ENCODE measurements at regions of chr17 and their contacts with region 1.

Region 1: GRCh38 chr17:7851438-7852256 is 3.2 kb upstream of the TMEM88 start:
- DNase-seq: peak; percentile 90 to 98 (median 96)
- ATAC-seq: peak; percentile 84
- H3K4me3 ChIP-seq: peak overlapping the region; percentile 44 to 58
- H3K4me3 Mint-ChIP-seq: peak overlapping the region; percentile 68
- H3K27ac ChIP-seq: peak overlapping the region; percentile 53 to 54
- H3K27ac Mint-ChIP-seq: peak overlapping the region; percentile 91
- H3K4me1 ChIP-seq: peaks cover 27% of the 10 kb centered on the region
- H3K4me1 Mint-ChIP-seq: peaks cover 22% of the 10 kb centered on the region
- H3K27me3 ChIP-seq: no peaks in the 10 kb centered on the region
- H3K27me3 Mint-ChIP-seq: no peaks in the 10 kb centered on the region
- CTCF ChIP-seq: peak; percentile 97

Region 2: DNA sequence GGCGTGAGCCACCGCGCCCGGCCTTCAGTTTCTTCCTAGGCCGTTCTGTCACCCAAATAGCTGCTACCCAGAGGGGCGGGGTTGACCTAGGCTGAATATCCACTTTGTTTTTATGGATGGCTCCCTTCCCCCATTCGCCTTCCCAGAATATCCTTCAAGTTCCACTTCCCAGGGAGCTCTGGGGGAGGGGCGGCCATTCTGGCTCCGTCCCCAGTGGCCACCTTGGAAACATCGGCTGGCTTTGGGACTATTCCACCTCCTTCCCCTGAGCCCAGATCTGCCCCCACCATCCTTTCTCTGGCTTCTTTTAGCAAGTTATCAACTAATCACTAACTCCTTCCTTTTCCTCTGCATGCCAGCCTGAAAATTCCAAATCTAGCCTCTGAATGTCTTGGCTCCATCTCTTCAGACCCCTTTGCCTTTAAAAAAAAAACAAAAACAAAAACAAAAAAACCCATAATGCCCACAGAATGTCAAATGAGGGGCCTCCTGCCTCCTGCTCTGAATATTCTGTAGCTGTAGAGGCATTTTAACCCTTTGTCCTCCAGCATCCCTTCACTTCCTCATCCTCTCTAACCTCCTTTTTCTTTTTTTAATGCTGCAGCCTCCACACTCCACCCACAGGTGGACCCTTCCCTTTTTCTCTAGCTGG is 194.6 kb before region 1 on chr17:
- CTCF ChIA-PET with region 1: no interaction called
- POLR2A ChIA-PET with region 1: no interaction called
- intact Hi-C with region 1: no loop called
- DNase-seq: no peak
- ATAC-seq: no peak
- H3K4me3 ChIP-seq: no peak overlapping the region
- H3K4me3 Mint-ChIP-seq: no peak overlapping the region
- H3K27ac ChIP-seq: no peak overlapping the region
- H3K27ac Mint-ChIP-seq: no peak overlapping the region
- H3K4me1 ChIP-seq: no peaks in the 10 kb centered on the region
- H3K4me1 Mint-ChIP-seq: peaks cover under 1% of the 10 kb centered on the region
- H3K27me3 ChIP-seq: peaks cover 0 to under 1% of the 10 kb centered on the region in 2 experiments
- H3K27me3 Mint-ChIP-seq: peaks cover under 1% of the 10 kb centered on the region
- CTCF ChIP-seq: no peak

Region 3: DNA sequence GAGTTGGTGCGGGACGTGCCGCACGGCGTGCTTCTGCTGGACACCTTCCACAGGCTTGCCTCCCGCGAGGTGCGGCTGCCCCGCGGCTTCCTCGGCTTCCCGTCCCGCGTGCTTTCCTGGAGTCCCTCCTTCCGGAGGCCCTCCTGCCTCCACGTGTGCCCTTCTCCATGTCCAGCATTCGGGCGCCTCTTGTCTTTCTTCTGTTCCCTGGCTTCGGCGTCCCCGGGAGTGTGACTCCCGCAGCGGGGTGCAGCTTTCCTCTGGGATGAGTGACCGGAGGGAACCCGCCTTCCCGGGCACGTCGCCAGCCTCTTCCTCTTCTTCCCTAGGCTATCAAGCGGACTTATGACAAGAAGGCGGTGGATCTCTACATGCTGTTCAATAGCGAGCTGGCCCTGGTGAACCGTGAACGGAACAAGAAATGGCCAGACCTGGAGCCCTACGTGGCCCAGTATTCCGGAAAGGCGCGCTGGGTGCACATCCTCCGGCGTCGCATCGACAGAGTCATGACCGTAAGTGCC is 111.1 kb before region 1 on chr17:
- CTCF ChIA-PET with region 1: interaction called, 4 read pairs
- POLR2A ChIA-PET with region 1: no interaction called
- intact Hi-C with region 1: loop called (anchors 1 kb)
- DNase-seq: no peak
- ATAC-seq: no peak
- H3K4me3 ChIP-seq: no peak overlapping the region
- H3K4me3 Mint-ChIP-seq: no peak overlapping the region
- H3K27ac ChIP-seq: no peak overlapping the region
- H3K27ac Mint-ChIP-seq: no peak overlapping the region
- H3K4me1 ChIP-seq: no peaks in the 10 kb centered on the region
- H3K4me1 Mint-ChIP-seq: no peaks in the 10 kb centered on the region
- H3K27me3 ChIP-seq: peaks cover 0 to 6% of the 10 kb centered on the region in 2 experiments
- H3K27me3 Mint-ChIP-seq: peaks cover 28% of the 10 kb centered on the region
- CTCF ChIP-seq: no peak

Region 4: GRCh38 chr17:8091033-8091687 is 239.5 kb after region 1 on chr17:
- CTCF ChIA-PET with region 1: no interaction called
- POLR2A ChIA-PET with region 1: no interaction called
- intact Hi-C with region 1: no loop called
- DNase-seq: peak in 1 of 9 experiments; percentile 28
- ATAC-seq: no peak
- H3K4me3 ChIP-seq: no peak overlapping the region
- H3K4me3 Mint-ChIP-seq: no peak overlapping the region
- H3K27ac ChIP-seq: no peak overlapping the region
- H3K27ac Mint-ChIP-seq: no peak overlapping the region
- H3K4me1 ChIP-seq: peaks cover 11% of the 10 kb centered on the region
- H3K4me1 Mint-ChIP-seq: peaks cover 8% of the 10 kb centered on the region
- H3K27me3 ChIP-seq: peaks cover 0 to 5% of the 10 kb centered on the region in 2 experiments
- H3K27me3 Mint-ChIP-seq: peaks cover 33% of the 10 kb centered on the region
- CTCF ChIP-seq: no peak

Measured in CD8-positive, alpha-beta T cell (primary cell).